IMR-90 (cell line): ENCODE measurements at regions of chr6 and their contacts with region 1.

Region 1: DNA sequence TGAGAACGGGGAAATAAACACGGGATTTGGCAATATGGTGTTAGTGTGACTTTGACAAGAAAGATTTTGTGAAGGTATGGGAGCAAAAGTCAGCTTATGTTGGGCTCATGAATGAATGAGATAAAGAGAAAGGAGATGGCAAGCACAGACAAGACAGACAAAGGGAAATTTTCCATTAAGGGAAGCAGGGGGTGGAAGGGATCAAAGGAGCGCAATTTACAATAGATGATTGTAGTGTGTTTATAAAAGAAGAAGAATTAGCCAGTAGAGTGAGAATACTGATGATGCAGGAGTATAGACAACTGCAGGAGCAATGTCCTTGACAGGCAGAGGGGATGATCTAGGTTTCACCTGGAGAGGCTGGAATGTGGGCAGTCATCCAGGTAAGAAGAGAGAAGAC is 34.1 kb downstream of the RBM24 start:
- DNase-seq: no peak
- ATAC-seq: no peak
- H3K4me3 ChIP-seq: no peak overlapping the region
- H3K27ac ChIP-seq: no peak overlapping the region
- H3K4me1 ChIP-seq: peaks cover 4% of the 10 kb centered on the region
- H3K27me3 ChIP-seq: no peaks in the 10 kb centered on the region
- CTCF ChIP-seq: no peak
- POLR2A ChIP-seq: no peak
- RAD21 ChIP-seq: no peak

Region 2: DNA sequence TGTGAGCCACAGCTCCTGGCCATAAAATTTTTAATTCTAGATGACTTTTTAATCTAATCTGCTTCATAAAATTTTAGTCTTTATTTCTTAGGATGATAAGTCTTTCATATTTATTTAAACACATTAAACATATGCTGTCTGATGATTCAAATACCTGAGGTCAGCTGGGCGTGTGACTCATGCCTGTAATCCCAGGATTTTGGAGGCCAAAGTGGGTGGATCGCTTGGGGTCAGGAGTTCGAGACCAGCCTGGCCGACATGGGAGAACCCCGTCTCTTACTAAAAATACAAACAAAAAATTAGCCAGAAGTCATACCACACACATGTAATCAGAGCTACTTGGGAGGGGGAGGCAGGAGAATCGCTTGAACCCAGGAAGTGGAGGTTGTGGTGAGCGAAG is 19.0 kb after region 1 on chr6:
- CTCF ChIA-PET with region 1: interaction called, 3 read pairs
- POLR2A ChIA-PET with region 1: interaction called, 11 read pairs
- dilution Hi-C with region 1: no loop called
- in situ Hi-C with region 1: no loop called
- intact Hi-C with region 1: no loop called
- DNase-seq: peak; percentile 70
- ATAC-seq: no peak
- H3K4me3 ChIP-seq: no peak overlapping the region
- H3K27ac ChIP-seq: no peak overlapping the region
- H3K4me1 ChIP-seq: peaks cover 2% of the 10 kb centered on the region
- H3K27me3 ChIP-seq: no peaks in the 10 kb centered on the region; the same call in 1 of the 2 replicates
- CTCF ChIP-seq: no peak
- POLR2A ChIP-seq: no peak
- RAD21 ChIP-seq: no peak